CD8-positive, alpha-beta T cell (primary cell): ENCODE measurements at regions of chr7 and their contacts with region 1.

Region 1: DNA sequence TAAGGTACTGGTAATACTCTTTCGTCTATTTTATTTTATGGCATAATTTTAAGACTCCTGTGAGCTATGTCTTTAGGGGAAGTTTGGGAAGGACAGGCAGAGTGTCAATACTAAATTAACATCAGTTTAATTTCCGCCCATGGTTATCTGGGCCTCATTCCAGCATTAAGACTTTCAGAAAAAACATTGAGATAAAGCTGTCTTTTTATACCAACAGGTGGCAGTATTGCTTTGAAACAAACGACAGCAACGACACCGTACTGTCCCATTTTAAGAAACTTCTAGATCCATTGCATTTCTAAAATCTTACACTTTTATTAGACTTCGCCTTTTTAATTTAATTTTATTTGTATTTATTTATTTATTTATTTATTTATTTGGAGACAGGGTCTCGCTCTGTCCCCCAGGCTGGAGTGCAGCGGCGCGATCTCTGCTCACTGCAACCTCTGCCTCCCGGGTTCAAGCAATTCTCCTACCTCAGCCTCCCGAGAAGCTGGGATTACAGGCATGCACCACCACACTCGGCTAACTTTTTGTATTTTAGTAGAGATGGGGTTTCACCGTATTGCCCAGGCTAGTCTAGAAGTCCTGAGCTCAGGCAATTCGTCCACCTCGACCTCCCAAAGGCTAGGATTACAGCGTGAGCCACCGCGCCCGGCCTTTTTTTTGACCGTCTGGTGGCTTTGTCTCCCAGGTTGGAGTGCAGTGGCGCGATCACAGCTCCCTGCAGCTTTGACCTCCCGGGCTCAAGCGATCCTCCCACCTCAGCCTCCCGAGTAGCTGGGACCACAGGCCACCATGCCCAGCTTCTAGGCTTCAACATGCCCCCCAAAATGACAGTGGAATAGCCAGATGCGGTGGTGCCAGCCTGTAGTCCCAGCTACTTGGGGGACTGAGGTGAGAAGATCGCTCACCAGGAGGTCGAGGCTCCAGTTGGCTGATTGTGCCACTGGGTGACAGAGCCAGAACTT is 78.7 kb upstream of the C1GALT1 start:
- DNase-seq: peak in 3 of 9 experiments; percentile 50 to 81 (median 73)
- ATAC-seq: peak; percentile 71
- H3K4me3 ChIP-seq: no peak overlapping the region
- H3K4me3 Mint-ChIP-seq: no peak overlapping the region
- H3K27ac ChIP-seq: no peak overlapping the region
- H3K27ac Mint-ChIP-seq: no peak overlapping the region
- H3K4me1 ChIP-seq: peaks cover 17% of the 10 kb centered on the region
- H3K4me1 Mint-ChIP-seq: peaks cover 20% of the 10 kb centered on the region
- H3K27me3 ChIP-seq: no peaks in the 10 kb centered on the region
- H3K27me3 Mint-ChIP-seq: no peaks in the 10 kb centered on the region
- CTCF ChIP-seq: peak; percentile 68

Region 2: GRCh38 chr7:6375348-6376101 is 728.1 kb before region 1 on chr7:
- CTCF ChIA-PET with region 1: no interaction called
- POLR2A ChIA-PET with region 1: no interaction called
- intact Hi-C with region 1: no loop called
- DNase-seq: peak in 6 of 9 experiments; percentile 15 to 64 (median 43)
- ATAC-seq: peak; percentile 16
- H3K4me3 ChIP-seq: peak overlapping the region; percentile 62 to 71
- H3K4me3 Mint-ChIP-seq: peak overlapping the region; percentile 93
- H3K27ac ChIP-seq: peak overlapping the region; percentile 76 to 80
- H3K27ac Mint-ChIP-seq: peak overlapping the region; percentile 95
- H3K4me1 ChIP-seq: peaks cover 29% of the 10 kb centered on the region
- H3K4me1 Mint-ChIP-seq: peaks cover 36% of the 10 kb centered on the region
- H3K27me3 ChIP-seq: no peaks in the 10 kb centered on the region
- H3K27me3 Mint-ChIP-seq: no peaks in the 10 kb centered on the region
- CTCF ChIP-seq: no peak

Region 3: GRCh38 chr7:7114706-7115295 is 11.2 kb after region 1 on chr7:
- CTCF ChIA-PET with region 1: interaction called, 18 read pairs
- POLR2A ChIA-PET with region 1: no interaction called
- intact Hi-C with region 1: no loop called
- DNase-seq: no peak
- ATAC-seq: no peak
- H3K4me3 ChIP-seq: no peak overlapping the region
- H3K4me3 Mint-ChIP-seq: no peak overlapping the region
- H3K27ac ChIP-seq: no peak overlapping the region
- H3K27ac Mint-ChIP-seq: no peak overlapping the region
- H3K4me1 ChIP-seq: no peaks in the 10 kb centered on the region
- H3K4me1 Mint-ChIP-seq: peaks cover 1% of the 10 kb centered on the region
- H3K27me3 ChIP-seq: no peaks in the 10 kb centered on the region
- H3K27me3 Mint-ChIP-seq: no peaks in the 10 kb centered on the region
- CTCF ChIP-seq: no peak

Region 4: GRCh38 chr7:7190142-7190541 is 86.5 kb after region 1 on chr7:
- CTCF ChIA-PET with region 1: interaction called, 81 read pairs
- POLR2A ChIA-PET with region 1: no interaction called
- intact Hi-C with region 1: no loop called
- DNase-seq: no peak
- ATAC-seq: no peak
- H3K4me3 ChIP-seq: no peak overlapping the region
- H3K4me3 Mint-ChIP-seq: no peak overlapping the region
- H3K27ac ChIP-seq: no peak overlapping the region
- H3K27ac Mint-ChIP-seq: peak overlapping the region; percentile 46
- H3K4me1 ChIP-seq: peaks cover 53% of the 10 kb centered on the region
- H3K4me1 Mint-ChIP-seq: peaks cover 51% of the 10 kb centered on the region
- H3K27me3 ChIP-seq: no peaks in the 10 kb centered on the region
- H3K27me3 Mint-ChIP-seq: no peaks in the 10 kb centered on the region
- CTCF ChIP-seq: no peak

Region 5: DNA sequence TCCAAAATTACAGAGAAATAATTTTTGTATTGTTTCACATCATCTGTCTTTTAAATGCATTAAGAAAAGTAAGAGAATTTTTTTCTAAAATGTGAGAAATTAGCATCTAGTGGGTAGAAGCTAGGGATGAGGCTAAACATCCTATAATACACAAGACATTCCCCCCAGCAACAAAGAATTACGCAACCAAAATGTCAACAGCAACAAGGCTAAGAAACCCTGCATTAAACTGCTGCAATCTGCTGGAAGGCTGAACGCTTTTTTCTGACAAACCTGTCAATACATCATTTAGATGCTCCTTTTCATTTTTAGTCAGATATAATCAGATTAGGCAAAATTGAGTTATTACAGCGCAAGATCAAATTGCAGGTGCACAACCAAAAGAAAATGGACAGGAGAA is 241.0 kb after region 1 on chr7:
- CTCF ChIA-PET with region 1: interaction called, 5 read pairs
- POLR2A ChIA-PET with region 1: no interaction called
- intact Hi-C with region 1: loop called in 1 of 2 experiments (anchors 10 kb)
- DNase-seq: no peak
- ATAC-seq: no peak
- H3K4me3 ChIP-seq: no peak overlapping the region
- H3K4me3 Mint-ChIP-seq: no peak overlapping the region
- H3K27ac ChIP-seq: no peak overlapping the region
- H3K27ac Mint-ChIP-seq: no peak overlapping the region
- H3K4me1 ChIP-seq: no peaks in the 10 kb centered on the region
- H3K4me1 Mint-ChIP-seq: no peaks in the 10 kb centered on the region
- H3K27me3 ChIP-seq: no peaks in the 10 kb centered on the region
- H3K27me3 Mint-ChIP-seq: peaks cover 3% of the 10 kb centered on the region
- CTCF ChIP-seq: no peak

Region 6: GRCh38 chr7:7542251-7542835 is 438.7 kb after region 1 on chr7:
- CTCF ChIA-PET with region 1: interaction called, 61 read pairs
- POLR2A ChIA-PET with region 1: interaction called, 6 read pairs
- intact Hi-C with region 1: loop called (anchors 1 kb)
- DNase-seq: no peak
- ATAC-seq: no peak
- H3K4me3 ChIP-seq: no peak overlapping the region
- H3K4me3 Mint-ChIP-seq: no peak overlapping the region
- H3K27ac ChIP-seq: no peak overlapping the region
- H3K27ac Mint-ChIP-seq: no peak overlapping the region
- H3K4me1 ChIP-seq: no peaks in the 10 kb centered on the region
- H3K4me1 Mint-ChIP-seq: peaks cover 2% of the 10 kb centered on the region
- H3K27me3 ChIP-seq: no peaks in the 10 kb centered on the region
- H3K27me3 Mint-ChIP-seq: peaks cover 2% of the 10 kb centered on the region
- CTCF ChIP-seq: no peak

Region 7: GRCh38 chr7:8217200-8218068 is 1113.8 kb after region 1 on chr7:
- CTCF ChIA-PET with region 1: interaction called, 4 read pairs
- POLR2A ChIA-PET with region 1: no interaction called
- intact Hi-C with region 1: loop called (anchors 1 kb)
- DNase-seq: peak in 3 of 9 experiments; percentile 55 to 81 (median 74)
- ATAC-seq: peak; percentile 58
- H3K4me3 ChIP-seq: no peak overlapping the region
- H3K4me3 Mint-ChIP-seq: no peak overlapping the region
- H3K27ac ChIP-seq: no peak overlapping the region
- H3K27ac Mint-ChIP-seq: no peak overlapping the region
- H3K4me1 ChIP-seq: no peaks in the 10 kb centered on the region
- H3K4me1 Mint-ChIP-seq: peaks cover 3% of the 10 kb centered on the region
- H3K27me3 ChIP-seq: no peaks in the 10 kb centered on the region
- H3K27me3 Mint-ChIP-seq: no peaks in the 10 kb centered on the region
- CTCF ChIP-seq: peak; percentile 79